ENCODE measurements at regions of chr2 and their contacts with region 1.

Region 1: GRCh38 chr2:240143801-240144648 is 3.6 kb upstream of the OTOS start:
- DNase-seq: peak; percentile 54 to 93 (median 64)
- ATAC-seq: peak; percentile 95
- H3K4me3 ChIP-seq: no peak overlapping the region
- H3K27ac ChIP-seq: no peak overlapping the region
- H3K4me1 ChIP-seq: no peaks in the 10 kb centered on the region
- H3K27me3 ChIP-seq: peaks cover 0 to 64% of the 10 kb centered on the region in 2 donors
- CTCF ChIP-seq: peak; percentile 93 to 95

Region 2: DNA sequence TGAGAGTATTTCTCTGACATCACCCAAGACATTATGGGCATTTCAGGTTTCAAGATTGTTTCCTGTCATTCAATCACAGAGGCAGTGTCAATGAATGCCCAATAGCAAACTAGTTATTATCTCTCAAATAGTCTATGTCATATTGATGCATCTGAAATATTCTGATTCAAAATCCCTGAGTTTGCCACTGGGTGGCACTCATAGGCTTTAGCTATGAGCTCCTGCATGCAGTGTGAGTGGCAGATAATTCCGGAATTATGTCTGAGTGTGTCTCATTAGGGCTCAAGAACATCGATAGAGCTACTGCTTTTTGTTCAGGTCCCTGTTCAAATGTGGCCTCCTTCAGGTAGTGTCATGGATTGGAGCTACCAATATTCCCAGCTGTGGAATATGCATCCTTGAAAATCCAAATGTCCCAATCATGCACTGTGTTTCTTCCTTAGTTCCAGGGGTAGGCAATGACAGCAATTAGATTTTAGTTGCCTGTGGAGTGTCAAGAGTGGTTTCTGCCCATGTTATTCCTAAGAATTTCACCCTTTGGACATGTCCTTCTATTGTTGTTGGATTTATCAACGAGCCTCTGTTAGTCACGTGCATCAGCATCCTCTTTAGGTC is 82.9 kb before region 1 on chr2:
- intact Hi-C with region 1: loop called in 1 of 2 experiments (anchors 5 kb)
- DNase-seq: peak in 2 of 4 donors; percentile 14 to 42
- ATAC-seq: peak; percentile 86
- H3K4me3 ChIP-seq: no peak overlapping the region
- H3K27ac ChIP-seq: no peak overlapping the region
- H3K4me1 ChIP-seq: no peaks in the 10 kb centered on the region
- H3K27me3 ChIP-seq: peaks cover 0 to 42% of the 10 kb centered on the region in 2 donors
- CTCF ChIP-seq: peak; percentile 32 to 52